Kidney (tissue), 22 donors: ENCODE measurements at regions of chr19 and their contacts with region 1.

Region 1: GRCh38 chr19:46513461-46514236 is 18.0 kb upstream of the PNMA8B start:
- DNase-seq: peak; percentile 72 to 93 (median 90)
- H3K4me3 ChIP-seq: no peak overlapping the region
- H3K27ac ChIP-seq: no peak overlapping the region
- H3K4me1 ChIP-seq: no peaks in the 10 kb centered on the region
- H3K27me3 ChIP-seq: no peaks in the 10 kb centered on the region
- CTCF ChIP-seq: peak; percentile 97

Region 2: DNA sequence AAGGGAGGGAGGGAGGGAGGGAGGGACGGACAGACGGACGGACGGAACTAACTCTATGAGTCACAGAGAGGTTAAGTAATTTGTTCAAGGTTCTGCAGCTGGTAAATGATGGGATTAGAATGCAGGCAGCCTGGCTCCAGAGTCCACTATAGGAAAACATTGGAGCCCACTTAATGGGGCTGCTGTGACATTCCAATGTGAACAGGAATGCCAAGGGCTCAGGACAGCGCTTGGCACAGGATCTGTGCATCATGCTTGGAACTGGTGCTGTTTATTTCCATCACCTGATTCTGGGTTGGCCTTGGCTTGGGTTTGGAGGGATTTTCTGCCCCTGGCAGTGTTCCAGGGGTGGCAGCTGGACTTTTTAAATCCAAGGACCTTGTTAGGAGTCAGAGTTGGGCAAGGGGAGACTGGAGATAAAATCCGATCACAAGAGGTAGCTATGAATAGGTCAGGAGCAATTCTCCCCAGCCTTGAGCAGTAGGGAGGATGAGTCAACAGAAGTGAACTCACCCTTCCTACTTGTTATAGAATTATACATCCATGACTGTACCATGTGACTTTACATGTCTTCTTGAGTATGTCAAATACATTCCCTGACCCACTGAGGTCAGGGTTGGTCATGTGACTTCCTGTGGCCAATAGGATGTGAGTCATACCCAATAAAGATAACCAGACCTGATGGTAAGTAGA is 224.6 kb before region 1 on chr19:
- intact Hi-C with region 1: loop called (anchors 10 kb)
- DNase-seq: no peak
- H3K4me3 ChIP-seq: no peak overlapping the region
- H3K27ac ChIP-seq: no peak overlapping the region
- H3K4me1 ChIP-seq: peaks cover 0 to 4% (median 0%) of the 10 kb centered on the region in 3 donors
- H3K27me3 ChIP-seq: no peaks in the 10 kb centered on the region
- CTCF ChIP-seq: no peak

Region 3: GRCh38 chr19:46600384-46601317 is 87.0 kb after region 1 on chr19:
- intact Hi-C with region 1: no loop called
- DNase-seq: peak; percentile 98 to 99 (median 99)
- H3K4me3 ChIP-seq: peak overlapping the region; percentile 92 to 97 (median 97)
- H3K27ac ChIP-seq: peak overlapping the region; percentile 100
- H3K4me1 ChIP-seq: peaks cover 0 to 29% (median 20%) of the 10 kb centered on the region in 3 donors
- H3K27me3 ChIP-seq: no peaks in the 10 kb centered on the region
- CTCF ChIP-seq: no peak